Breast epithelium (tissue), 4 donors: ENCODE measurements at regions of chr1 and their contacts with region 1.

Region 1: DNA sequence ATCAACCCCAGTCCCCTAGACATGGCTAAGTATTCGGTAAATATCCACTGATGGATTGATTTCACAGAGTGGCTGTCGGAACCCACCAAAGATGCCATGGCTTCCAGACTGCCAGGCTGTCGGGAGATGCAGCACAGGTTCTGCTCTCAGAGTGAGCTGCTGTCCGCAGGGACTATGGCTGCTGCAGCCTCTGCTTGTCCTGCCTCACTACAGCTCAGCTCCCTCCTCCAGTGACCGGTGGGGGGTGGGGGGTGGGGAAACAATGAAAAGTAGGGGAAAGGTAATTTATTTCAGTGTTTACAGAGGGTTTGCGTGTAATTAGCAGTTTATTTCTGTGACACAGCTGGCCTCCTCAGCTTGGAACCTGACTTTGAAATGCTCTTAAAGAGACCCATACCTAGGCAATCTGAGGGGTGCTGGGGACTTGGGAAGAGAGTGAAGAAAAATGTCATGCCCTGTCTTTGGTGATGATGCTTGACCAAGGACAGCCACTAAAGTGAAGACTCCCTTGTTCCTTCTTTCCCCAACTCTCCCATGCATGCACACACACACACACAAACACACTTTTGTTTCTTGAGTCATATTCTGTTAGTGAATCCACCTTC is 109.0 kb downstream of the CACNA1E start:
- DNase-seq: no peak
- H3K4me3 ChIP-seq: no peak overlapping the region
- H3K27ac ChIP-seq: no peak overlapping the region
- H3K4me1 ChIP-seq: no peaks in the 10 kb centered on the region
- H3K27me3 ChIP-seq: no peaks in the 10 kb centered on the region
- CTCF ChIP-seq: no peak
- POLR2A ChIP-seq: no peak

Region 2: GRCh38 chr1:182839209-182840065 is 1247.1 kb after region 1 on chr1 and contains the start of gene DHX9:
- intact Hi-C with region 1: loop called (anchors 5 kb)
- DNase-seq: peak; percentile 88 to 96
- H3K4me3 ChIP-seq: peak within 1 kb of the TSS; percentile 79 to 86 (median 85)
- H3K27ac ChIP-seq: peak within 1 kb of the TSS; percentile 95 to 96
- H3K4me1 ChIP-seq: no peaks in the 10 kb centered on the region
- H3K27me3 ChIP-seq: no peaks in the 10 kb centered on the region
- CTCF ChIP-seq: no peak
- POLR2A ChIP-seq: peak; percentile 81
- total RNA-seq, gene DHX9: 89.3 to 173 (median 134) TPM